ENCODE measurements at regions of chr22 and their contacts with region 1.

Region 1: DNA sequence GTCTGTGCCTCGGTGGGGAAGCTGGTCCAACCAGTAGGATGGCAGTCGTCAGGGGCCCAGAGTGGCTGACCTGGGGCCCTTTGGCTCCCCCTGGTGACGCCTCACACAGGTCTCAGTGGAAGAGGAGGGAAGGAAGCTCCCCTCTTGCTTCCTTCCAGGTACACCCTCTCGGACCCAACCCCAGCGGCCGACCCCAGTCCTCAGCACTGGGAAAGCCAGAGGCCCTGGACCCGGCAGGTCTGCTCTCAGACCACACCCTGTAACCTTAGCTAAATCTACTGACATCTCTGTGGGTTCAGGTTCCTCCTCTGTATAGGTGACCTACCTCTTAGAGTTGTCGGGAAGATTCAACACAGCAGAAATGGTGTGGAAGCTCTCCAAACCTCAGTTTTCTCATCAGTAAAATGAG is 3.4 kb upstream of the SCUBE1 start:
- DNase-seq: peak; percentile 87
- H3K4me3 ChIP-seq: no peak overlapping the region
- H3K27ac ChIP-seq: peak overlapping the region in 2 of 8 donors; percentile 38 to 41
- H3K4me1 ChIP-seq: peaks cover 0 to 47% (median 31%) of the 10 kb centered on the region in 6 donors
- H3K27me3 ChIP-seq: peaks cover 0 to 82% (median 26%) of the 10 kb centered on the region in 7 donors
- CTCF ChIP-seq: peak; percentile 26 to 81 (median 69)
- POLR2A ChIP-seq: no peak

Region 2: GRCh38 chr22:43230971-43231723 is 115.4 kb before region 1 on chr22:
- intact Hi-C with region 1: loop called (anchors 5 kb)
- DNase-seq: peak; percentile 86
- H3K4me3 ChIP-seq: no peak overlapping the region
- H3K27ac ChIP-seq: peak overlapping the region in 4 of 8 donors; percentile 12 to 59 (median 50)
- H3K4me1 ChIP-seq: peaks cover 2 to 35% (median 17%) of the 10 kb centered on the region in 6 donors
- H3K27me3 ChIP-seq: peaks cover 0 to 16% (median 0%) of the 10 kb centered on the region in 7 donors
- CTCF ChIP-seq: peak; percentile 73 to 94 (median 88)
- POLR2A ChIP-seq: no peak

Region 3: GRCh38 chr22:43273902-43274484 is 72.5 kb before region 1 on chr22:
- intact Hi-C with region 1: loop called (anchors 5 kb)
- DNase-seq: no peak
- H3K4me3 ChIP-seq: no peak overlapping the region
- H3K27ac ChIP-seq: peak overlapping the region in 3 of 8 donors; percentile 30 to 80 (median 44)
- H3K4me1 ChIP-seq: peaks cover 3 to 45% (median 15%) of the 10 kb centered on the region in 6 donors
- H3K27me3 ChIP-seq: peaks cover 0 to 15% (median 0%) of the 10 kb centered on the region in 7 donors
- CTCF ChIP-seq: peak; percentile 42 to 83 (median 67)
- POLR2A ChIP-seq: no peak

Measured in spleen (tissue), 13 donors.